ENCODE measurements at regions of chr4 and their contacts with region 1.

Region 1: DNA sequence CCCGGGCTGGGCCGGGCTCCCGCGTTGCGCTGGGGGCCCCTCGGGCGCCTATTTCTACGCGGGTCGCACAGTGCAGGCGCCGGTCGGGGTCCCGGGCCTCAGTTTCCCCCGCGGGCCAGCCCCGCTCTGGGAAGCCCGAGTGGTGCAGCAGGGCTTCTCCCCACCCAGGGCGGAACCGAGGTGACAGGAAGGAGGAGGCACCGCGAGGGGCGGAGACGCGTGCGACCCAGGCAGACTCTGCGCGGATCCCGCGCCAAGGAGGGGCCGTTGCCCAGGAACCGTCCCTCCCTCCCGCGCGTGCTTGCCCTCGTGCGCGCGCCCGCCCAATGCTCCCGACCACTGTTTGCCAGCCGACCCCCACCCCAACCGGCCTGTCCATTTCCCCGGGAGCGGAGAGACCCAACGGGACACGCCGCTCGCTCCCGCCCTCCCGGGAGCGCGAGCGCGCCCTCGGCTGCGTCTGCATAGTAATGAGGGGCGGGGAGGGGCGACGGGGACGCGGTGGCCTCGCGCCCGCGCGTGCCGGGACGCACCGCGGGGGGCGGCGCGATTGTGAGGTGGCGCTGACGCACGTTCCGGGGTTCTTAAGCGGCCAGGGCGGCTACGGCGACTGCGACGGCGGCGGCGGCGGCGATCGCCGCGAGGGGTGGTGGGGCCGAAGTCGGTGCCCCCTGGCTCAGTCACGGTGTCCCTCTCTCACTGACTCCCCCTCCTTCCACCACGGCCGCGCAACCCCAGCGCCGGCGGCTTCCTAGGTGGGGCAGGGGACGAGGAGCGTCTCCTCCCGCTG is at the start of gene CPEB2:
- DNase-seq: peak in 1 of 2 donors; percentile 98
- H3K4me3 ChIP-seq: peak within 1 kb of the TSS; percentile 87 to 95
- H3K27ac ChIP-seq: peak within 1 kb of the TSS; percentile 100
- H3K4me1 ChIP-seq: peaks cover 19% of the 10 kb centered on the region
- H3K27me3 ChIP-seq: no peaks in the 10 kb centered on the region
- CTCF ChIP-seq: peak in 1 of 3 experiments; percentile 12
- POLR2A ChIP-seq: peak; percentile 90 to 99
- total RNA-seq, gene CPEB2: 40.0 TPM

Region 2: DNA sequence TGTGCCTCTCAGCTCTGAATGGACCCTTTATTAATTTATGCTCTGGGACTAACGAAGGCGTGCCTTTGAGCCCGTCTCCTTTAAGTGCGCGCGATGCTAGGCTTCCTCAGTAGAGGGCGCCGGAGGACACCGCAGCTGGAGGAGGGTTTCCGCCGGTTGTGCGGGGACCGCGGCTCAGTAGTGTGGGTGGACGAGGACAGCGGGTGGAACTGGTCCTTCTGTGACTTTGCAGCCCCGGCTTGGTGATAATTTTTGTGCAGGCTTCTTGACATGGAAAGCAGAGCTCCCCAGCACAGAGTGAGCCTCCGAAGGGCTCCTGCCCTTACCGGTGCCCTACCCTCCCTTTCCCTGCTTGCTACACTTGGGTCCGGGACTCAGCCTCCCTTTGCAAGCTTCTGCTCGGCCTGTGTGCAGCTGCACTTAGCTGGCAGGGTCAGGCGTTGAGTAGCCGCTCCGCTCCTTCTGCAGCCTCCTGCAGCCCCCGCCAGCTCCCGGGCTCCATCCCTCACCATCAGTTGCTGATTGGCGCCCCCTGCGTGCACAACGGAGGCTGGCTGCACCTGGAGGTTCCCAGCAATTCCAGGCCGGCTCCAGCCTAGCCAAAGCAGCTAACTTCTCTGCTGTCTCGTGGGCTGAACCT is 1347.8 kb before region 1 on chr4:
- intact Hi-C with region 1: loop called (anchors 5 kb)
- DNase-seq: no peak
- H3K4me3 ChIP-seq: peak overlapping the region; percentile 38 to 47
- H3K27ac ChIP-seq: no peak overlapping the region
- H3K4me1 ChIP-seq: peaks cover 11% of the 10 kb centered on the region
- H3K27me3 ChIP-seq: no peaks in the 10 kb centered on the region
- CTCF ChIP-seq: peak; percentile 19 to 71 (median 67)
- POLR2A ChIP-seq: no peak

Region 3: GRCh38 chr4:15649914-15650545 is 648.0 kb after region 1 on chr4:
- intact Hi-C with region 1: loop called (anchors 5 kb)
- DNase-seq: no peak
- H3K4me3 ChIP-seq: no peak overlapping the region
- H3K27ac ChIP-seq: peak overlapping the region; percentile 99
- H3K4me1 ChIP-seq: peaks cover 85% of the 10 kb centered on the region
- H3K27me3 ChIP-seq: no peaks in the 10 kb centered on the region
- CTCF ChIP-seq: peak in 2 of 3 experiments; percentile 42 to 59
- POLR2A ChIP-seq: no peak

Region 4: DNA sequence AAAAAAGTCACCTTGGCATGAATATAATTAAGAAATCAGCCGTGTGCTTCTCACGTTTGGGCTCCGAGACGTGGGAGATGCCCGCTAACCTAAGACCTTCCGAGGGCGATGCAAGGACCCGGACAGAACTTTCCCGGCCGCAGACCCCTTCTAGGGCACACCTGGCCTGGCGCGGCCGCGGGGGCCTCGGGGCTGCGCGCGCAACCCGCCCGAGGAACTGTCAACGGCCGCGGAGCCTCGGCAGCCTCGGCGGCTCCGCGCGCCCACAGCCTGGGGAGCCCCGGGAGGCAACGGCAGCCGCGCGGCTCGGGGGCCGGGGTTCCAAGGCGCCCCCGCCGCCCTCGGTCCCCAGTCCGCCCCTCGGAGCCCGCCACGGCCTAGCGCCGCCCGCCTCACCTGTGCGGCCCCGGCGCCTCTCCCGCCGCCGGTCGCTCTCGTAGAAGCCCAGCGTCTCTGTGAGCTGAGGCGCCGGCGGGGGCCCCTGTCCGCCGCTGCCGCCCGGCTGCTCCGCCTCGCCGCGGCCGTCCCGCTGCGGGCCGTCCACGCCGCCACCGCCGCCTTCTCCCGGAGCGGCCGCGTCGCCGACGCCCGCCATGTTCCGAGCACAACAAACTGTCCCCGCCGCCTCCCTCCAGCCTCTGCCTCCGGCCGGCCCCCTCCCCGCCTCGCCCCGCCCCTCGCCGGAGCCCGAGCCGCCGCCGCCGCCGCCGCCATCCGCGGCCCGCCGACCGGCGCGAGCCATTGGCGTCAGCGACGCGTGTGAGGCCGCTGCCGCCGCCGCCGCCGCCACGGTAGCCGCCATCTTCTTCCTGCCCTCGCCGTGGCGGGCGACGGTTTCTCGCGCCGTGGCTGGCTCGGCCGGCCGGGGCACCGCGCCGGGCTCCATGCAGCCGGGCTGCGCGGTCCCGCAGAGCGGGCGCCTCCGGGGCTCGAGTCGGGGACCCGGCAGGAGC is 1224.1 kb after region 1 on chr4 and contains the start of gene TAPT1:
- intact Hi-C with region 1: loop called (anchors 10 kb)
- DNase-seq: no peak
- H3K4me3 ChIP-seq: peak within 1 kb of the TSS; percentile 82 to 97
- H3K27ac ChIP-seq: peak within 1 kb of the TSS; percentile 96
- H3K4me1 ChIP-seq: peaks cover 31% of the 10 kb centered on the region
- H3K27me3 ChIP-seq: no peaks in the 10 kb centered on the region
- CTCF ChIP-seq: no peak
- POLR2A ChIP-seq: peak in 1 of 2 donors; percentile 16
- total RNA-seq, gene TAPT1: 28.5 TPM